Gastrocnemius medialis (tissue), 4 donors: ENCODE measurements at regions of chr15 and their contacts with region 1.

Region 1: DNA sequence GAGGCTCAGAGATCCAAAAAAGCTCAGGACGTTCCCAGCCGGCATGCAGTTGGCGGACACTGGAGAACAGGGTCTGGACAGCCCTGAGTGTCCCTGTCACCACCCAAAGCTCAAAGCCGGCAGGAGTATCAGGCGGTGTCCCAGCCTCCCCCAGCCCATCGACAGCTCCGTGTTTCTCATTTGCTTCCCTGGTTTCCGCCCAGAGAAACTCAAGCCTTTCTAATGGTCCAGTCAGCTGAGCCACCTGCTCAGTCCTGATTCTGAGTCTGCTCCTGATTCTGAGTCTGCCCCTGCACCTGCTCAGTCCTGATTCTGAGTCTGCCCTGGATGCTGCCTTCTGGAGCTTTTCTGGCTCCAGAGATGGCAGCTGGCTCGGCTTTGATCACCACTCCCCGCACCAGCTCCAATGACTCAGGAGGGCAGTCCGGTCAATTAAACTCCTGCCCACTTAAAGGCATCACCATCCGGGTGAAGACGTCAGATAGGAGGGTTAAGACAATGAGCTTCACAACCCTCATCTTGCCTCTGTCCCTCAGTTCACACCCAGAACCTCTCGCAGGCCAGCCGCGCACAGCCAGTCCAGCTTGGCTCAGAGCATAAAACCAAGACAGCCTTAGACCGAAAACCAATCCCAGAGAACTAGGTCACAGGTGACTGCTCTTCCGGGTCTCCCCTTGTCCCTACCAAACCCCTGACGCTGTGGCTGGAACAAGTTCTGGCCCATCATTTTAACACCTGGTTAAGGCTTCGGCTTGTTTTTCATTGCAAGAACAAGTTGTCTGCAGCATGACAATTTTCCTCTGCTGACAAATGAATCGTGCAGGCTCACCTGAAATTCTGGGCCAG is 6.8 kb downstream of the PCSK6 start:
- DNase-seq: peak; percentile 74 to 77
- ATAC-seq: peak; percentile 89 to 91
- H3K4me3 ChIP-seq: peak overlapping the region in 2 of 4 donors; percentile 22 to 26
- H3K27ac ChIP-seq: peak overlapping the region; percentile 81 to 97 (median 88)
- H3K4me1 ChIP-seq: peaks cover 27 to 32% of the 10 kb centered on the region in 2 donors
- H3K27me3 ChIP-seq: no peaks in the 10 kb centered on the region
- CTCF ChIP-seq: no peak
- POLR2A ChIP-seq: peak; percentile 35 to 81

Region 2: DNA sequence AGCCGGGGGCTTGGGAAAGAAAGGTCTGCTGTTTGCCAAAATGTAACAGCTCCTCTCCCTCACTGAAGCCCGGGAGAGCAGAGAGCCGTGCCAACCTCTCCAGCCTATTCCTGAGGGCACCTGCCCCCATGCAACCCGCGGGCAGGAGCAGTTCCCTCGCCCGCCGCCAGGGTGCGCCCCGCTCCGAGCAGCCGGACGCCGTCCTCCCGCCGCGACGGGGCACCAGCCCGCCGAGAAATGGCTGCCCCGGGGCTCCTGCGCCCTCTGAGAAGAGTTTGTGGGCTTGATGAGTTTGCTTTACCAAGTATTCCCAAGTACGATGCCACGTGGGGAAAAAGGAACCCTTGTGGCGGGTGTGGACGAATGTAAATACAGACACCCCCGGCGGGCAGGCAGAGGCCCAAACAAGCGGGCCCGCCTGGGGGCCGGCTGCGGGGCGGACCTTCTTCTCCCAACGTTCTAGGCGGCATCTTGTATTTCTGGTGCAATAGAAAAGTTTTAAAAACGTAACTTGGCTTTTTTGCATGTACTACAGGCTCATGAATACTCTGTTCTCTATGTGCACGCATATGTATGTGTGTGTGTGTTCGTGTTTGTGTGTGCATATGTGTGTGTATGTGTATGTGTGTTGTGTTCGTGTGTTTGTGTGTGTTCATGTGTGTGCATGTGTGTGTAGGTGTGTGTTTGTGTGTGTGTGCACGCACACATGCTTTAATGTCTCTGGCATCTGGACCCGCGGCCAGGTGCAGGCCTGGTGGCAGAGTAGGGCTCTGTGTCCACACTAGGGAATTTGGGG is 393.8 kb before region 1 on chr15:
- in situ Hi-C with region 1: no loop called
- intact Hi-C with region 1: no loop called
- DNase-seq: peak; percentile 35 to 46
- ATAC-seq: peak; percentile 79 to 92
- H3K4me3 ChIP-seq: peak overlapping the region in 1 of 4 donors; percentile 46
- H3K27ac ChIP-seq: no peak overlapping the region
- H3K4me1 ChIP-seq: peaks cover 0 to 8% of the 10 kb centered on the region in 2 donors
- H3K27me3 ChIP-seq: no peaks in the 10 kb centered on the region
- CTCF ChIP-seq: peak; percentile 93 to 99 (median 96)
- POLR2A ChIP-seq: no peak

Region 3: GRCh38 chr15:101170568-101171350 is 312.0 kb before region 1 on chr15:
- in situ Hi-C with region 1: no loop called
- intact Hi-C with region 1: no loop called
- DNase-seq: peak in 1 of 2 donors; percentile 53
- ATAC-seq: peak; percentile 40 to 50
- H3K4me3 ChIP-seq: no peak overlapping the region
- H3K27ac ChIP-seq: no peak overlapping the region
- H3K4me1 ChIP-seq: peaks cover 12 to 32% of the 10 kb centered on the region in 2 donors
- H3K27me3 ChIP-seq: no peaks in the 10 kb centered on the region
- CTCF ChIP-seq: no peak
- POLR2A ChIP-seq: no peak

Region 4: GRCh38 chr15:101445562-101446517 is 36.9 kb before region 1 on chr15:
- in situ Hi-C with region 1: no loop called
- intact Hi-C with region 1: loop called (anchors 5 kb)
- DNase-seq: peak; percentile 50 to 71
- ATAC-seq: peak; percentile 86 to 93
- H3K4me3 ChIP-seq: peak overlapping the region in 1 of 4 donors; percentile 25
- H3K27ac ChIP-seq: peak overlapping the region; percentile 61 to 95 (median 74)
- H3K4me1 ChIP-seq: peaks cover 20 to 25% of the 10 kb centered on the region in 2 donors
- H3K27me3 ChIP-seq: no peaks in the 10 kb centered on the region
- CTCF ChIP-seq: no peak
- POLR2A ChIP-seq: peak in 1 of 2 donors; percentile 33